Pancreas (tissue), 10 donors: ENCODE measurements at regions of chr4 and their contacts with region 1.

Region 1: DNA sequence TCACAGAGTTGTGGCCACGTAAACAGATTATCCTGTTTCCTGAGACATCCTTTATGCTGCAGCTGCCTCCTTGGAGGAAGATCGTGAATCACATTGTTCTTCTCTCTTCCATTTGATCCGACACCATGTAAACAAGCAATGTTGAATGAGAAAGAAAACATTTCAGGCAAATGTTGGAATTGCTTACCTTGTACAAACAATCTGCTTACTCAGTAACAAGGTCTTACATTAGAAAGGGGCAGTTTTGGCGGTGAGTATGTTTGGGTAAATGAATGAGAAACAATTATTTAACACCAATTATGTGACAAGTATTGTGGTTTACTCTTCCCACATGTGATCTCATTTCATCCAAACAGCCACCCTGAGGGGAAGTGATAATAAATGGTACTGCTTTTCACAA is 637.8 kb downstream of the RAB28 start:
- DNase-seq: no peak
- ATAC-seq: no peak
- H3K4me3 ChIP-seq: no peak overlapping the region
- H3K27ac ChIP-seq: no peak overlapping the region
- H3K4me1 ChIP-seq: no peaks in the 10 kb centered on the region
- H3K27me3 ChIP-seq: peaks cover 0 to 14% (median 0%) of the 10 kb centered on the region in 4 donors
- CTCF ChIP-seq: no peak

Region 2: GRCh38 chr4:12933760-12934221 is 87.4 kb after region 1 on chr4:
- intact Hi-C with region 1: no loop called
- DNase-seq: no peak
- ATAC-seq: no peak
- H3K4me3 ChIP-seq: no peak overlapping the region
- H3K27ac ChIP-seq: no peak overlapping the region
- H3K4me1 ChIP-seq: no peaks in the 10 kb centered on the region
- H3K27me3 ChIP-seq: no peaks in the 10 kb centered on the region
- CTCF ChIP-seq: no peak

Region 3: DNA sequence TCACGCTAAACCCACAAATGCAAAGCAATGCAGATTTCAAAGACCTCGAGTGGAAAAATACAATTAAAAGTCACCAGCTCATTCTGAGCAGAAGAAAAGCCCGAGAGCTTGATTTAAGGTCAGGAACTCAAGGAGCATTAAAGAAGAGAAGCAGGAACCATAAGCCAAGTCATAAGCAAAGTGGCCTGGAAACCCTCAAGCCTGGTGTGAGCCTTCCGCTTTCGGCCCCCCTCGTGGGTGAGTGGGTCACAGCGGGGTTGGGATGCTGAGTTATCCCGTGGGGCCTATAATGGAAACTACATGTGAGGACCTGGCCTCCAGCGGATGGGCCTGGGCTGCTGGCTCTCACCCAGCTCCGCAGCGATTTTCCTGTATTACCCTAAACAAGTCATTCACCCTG is 133.4 kb after region 1 on chr4:
- intact Hi-C with region 1: no loop called
- DNase-seq: no peak
- ATAC-seq: no peak
- H3K4me3 ChIP-seq: no peak overlapping the region
- H3K27ac ChIP-seq: no peak overlapping the region
- H3K4me1 ChIP-seq: no peaks in the 10 kb centered on the region
- H3K27me3 ChIP-seq: no peaks in the 10 kb centered on the region
- CTCF ChIP-seq: no peak

Region 4: DNA sequence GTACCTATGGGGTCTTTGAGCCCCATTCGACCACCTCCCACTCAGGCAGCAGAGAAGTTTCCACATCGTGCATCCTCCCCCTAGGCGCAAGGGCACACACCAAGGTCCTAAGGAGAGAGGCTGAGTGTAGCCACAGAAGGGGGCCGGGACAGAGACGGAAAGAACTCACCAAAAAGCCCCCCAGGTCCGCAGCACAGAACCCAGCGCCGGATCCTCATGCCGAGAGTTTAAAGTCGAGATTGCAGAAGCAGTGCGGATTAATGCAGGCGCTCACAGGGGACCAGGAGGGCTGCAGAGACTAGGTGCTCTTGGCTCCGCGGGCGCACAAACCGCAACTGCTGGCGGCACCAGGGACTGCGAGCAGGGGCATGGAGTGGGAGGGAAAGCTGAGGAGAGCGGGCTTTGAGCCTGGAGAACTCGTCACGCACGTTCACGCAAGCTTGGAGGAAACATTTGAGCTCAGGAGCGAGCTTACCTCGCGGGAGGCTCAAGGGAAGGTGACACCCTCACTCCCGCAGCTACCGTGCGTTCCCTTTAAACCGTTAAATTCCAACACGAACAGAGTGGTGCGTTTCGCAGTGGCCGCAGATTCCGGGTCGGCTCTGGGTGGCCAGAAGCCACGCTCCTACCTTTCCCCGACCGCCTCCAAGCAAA is 689.5 kb after region 1 on chr4:
- intact Hi-C with region 1: loop called in 2 of 3 experiments (anchors 5 to 10 kb)
- DNase-seq: peak in 1 of 6 donors; percentile 36
- ATAC-seq: no peak
- H3K4me3 ChIP-seq: no peak overlapping the region
- H3K27ac ChIP-seq: no peak overlapping the region
- H3K4me1 ChIP-seq: peaks cover 0 to 4% (median 0%) of the 10 kb centered on the region in 3 donors
- H3K27me3 ChIP-seq: peaks cover 0 to 73% (median 7%) of the 10 kb centered on the region in 4 donors
- CTCF ChIP-seq: no peak